ENCODE measurements at regions of chr4 and their contacts with region 1.

Region 1: DNA sequence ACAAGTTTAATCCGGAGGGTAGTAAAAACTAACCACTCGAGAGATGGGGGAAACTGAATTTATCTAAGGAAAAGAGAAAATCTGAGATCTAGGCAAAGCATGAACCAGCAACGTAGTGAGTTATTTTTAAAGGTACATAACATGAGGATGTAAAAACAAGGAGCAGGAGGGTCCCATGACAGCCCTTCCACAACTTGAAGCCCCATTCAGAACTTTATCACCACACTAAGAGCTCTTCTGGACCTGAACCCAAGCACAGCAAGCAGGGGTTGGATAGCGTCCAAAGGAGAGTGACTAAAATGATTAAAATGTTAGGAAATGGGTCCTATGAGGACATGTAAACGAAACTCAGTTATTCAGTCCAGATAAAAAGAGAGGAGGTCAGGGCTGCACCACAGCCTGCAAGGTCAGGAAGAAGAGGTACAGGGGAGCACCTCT is 16.2 kb downstream of the SH3RF1 start:
- DNase-seq: peak; percentile 89
- H3K4me3 ChIP-seq: peak overlapping the region in 1 of 3 experiments; percentile 21
- H3K27ac ChIP-seq: peak overlapping the region; percentile 53
- H3K4me1 ChIP-seq: peaks cover 98% of the 10 kb centered on the region
- H3K27me3 ChIP-seq: no peaks in the 10 kb centered on the region
- CTCF ChIP-seq: no peak
- POLR2A ChIP-seq: peak; percentile 41

Region 2: GRCh38 chr4:168383510-168383909 is 871.1 kb before region 1 on chr4:
- CTCF ChIA-PET with region 1: no interaction called
- POLR2A ChIA-PET with region 1: no interaction called
- dilution Hi-C with region 1: no loop called
- intact Hi-C with region 1: no loop called
- DNase-seq: no peak
- H3K4me3 ChIP-seq: no peak overlapping the region
- H3K27ac ChIP-seq: no peak overlapping the region
- H3K4me1 ChIP-seq: peaks cover 24% of the 10 kb centered on the region
- H3K27me3 ChIP-seq: no peaks in the 10 kb centered on the region
- CTCF ChIP-seq: no peak
- POLR2A ChIP-seq: no peak

Region 3: GRCh38 chr4:169238445-169238844 is 16.1 kb before region 1 on chr4:
- CTCF ChIA-PET with region 1: interaction called, 3 read pairs
- POLR2A ChIA-PET with region 1: interaction called, 14 read pairs
- dilution Hi-C with region 1: no loop called
- intact Hi-C with region 1: loop called (anchors 2 kb)
- DNase-seq: peak; percentile 67
- H3K4me3 ChIP-seq: no peak overlapping the region
- H3K27ac ChIP-seq: no peak overlapping the region
- H3K4me1 ChIP-seq: peaks cover 24% of the 10 kb centered on the region
- H3K27me3 ChIP-seq: no peaks in the 10 kb centered on the region
- CTCF ChIP-seq: no peak
- POLR2A ChIP-seq: no peak

Region 4: GRCh38 chr4:169311643-169312365 is 57.2 kb after region 1 on chr4:
- CTCF ChIA-PET with region 1: no interaction called
- POLR2A ChIA-PET with region 1: no interaction called
- dilution Hi-C with region 1: no loop called
- intact Hi-C with region 1: no loop called
- DNase-seq: peak; percentile 57
- H3K4me3 ChIP-seq: no peak overlapping the region
- H3K27ac ChIP-seq: no peak overlapping the region
- H3K4me1 ChIP-seq: peaks cover 13% of the 10 kb centered on the region
- H3K27me3 ChIP-seq: no peaks in the 10 kb centered on the region
- CTCF ChIP-seq: peak; percentile 60 to 66
- POLR2A ChIP-seq: no peak